Psoas muscle (tissue), 8 donors: ENCODE measurements at regions of chr3 and their contacts with region 1.

Region 1: DNA sequence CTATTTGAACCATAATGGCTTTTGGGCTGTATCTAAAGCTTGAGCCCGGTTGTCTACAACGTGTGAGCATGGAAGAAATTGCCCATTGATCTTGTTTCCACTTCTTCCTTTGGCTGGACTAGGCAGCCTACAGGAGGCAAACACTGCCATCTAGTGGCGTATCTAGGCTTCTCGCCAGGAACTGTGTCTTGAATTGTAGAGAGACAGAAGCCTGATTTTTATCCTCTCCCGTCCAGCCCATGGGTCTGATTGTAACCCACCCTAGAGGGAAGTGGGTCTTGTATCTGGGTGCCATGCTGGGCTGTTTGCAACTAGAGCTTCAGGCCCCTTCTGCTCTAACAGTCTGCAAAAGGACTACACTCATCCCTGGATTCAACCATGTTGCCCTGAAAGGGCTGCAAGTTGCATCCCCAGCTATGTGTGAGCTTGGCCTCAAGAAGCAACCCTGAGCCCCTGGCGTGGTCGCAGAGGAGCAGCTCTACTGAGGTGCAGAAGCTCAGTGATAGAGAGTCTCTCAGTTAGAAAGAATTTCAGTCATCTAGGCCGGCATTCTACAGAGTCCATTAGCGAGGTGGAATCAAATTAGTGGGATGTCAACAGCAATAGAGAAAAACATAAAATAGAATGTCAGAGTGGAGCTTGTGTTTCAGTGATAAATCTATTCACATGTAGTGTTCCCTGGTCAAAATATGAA is 170.2 kb upstream of the UMPS start:
- DNase-seq: peak; percentile 47 to 73
- ATAC-seq: peak; percentile 75 to 90 (median 78)
- H3K4me3 ChIP-seq: no peak overlapping the region
- H3K27ac ChIP-seq: no peak overlapping the region
- H3K4me1 ChIP-seq: peaks cover 4% of the 10 kb centered on the region
- H3K27me3 ChIP-seq: no peaks in the 10 kb centered on the region
- CTCF ChIP-seq: peak; percentile 86

Region 2: GRCh38 chr3:124014366-124014942 is 545.6 kb before region 1 on chr3:
- intact Hi-C with region 1: loop called in 1 of 2 experiments (anchors 10 kb)
- DNase-seq: no peak
- ATAC-seq: no peak
- H3K4me3 ChIP-seq: no peak overlapping the region
- H3K27ac ChIP-seq: no peak overlapping the region
- H3K4me1 ChIP-seq: no peaks in the 10 kb centered on the region
- H3K27me3 ChIP-seq: no peaks in the 10 kb centered on the region
- CTCF ChIP-seq: no peak

Region 3: GRCh38 chr3:124351430-124352148 is 208.4 kb before region 1 on chr3:
- intact Hi-C with region 1: loop called in 1 of 2 experiments (anchors 5 kb)
- DNase-seq: no peak
- ATAC-seq: no peak
- H3K4me3 ChIP-seq: no peak overlapping the region
- H3K27ac ChIP-seq: no peak overlapping the region
- H3K4me1 ChIP-seq: no peaks in the 10 kb centered on the region
- H3K27me3 ChIP-seq: no peaks in the 10 kb centered on the region
- CTCF ChIP-seq: peak; percentile 47

Region 4: GRCh38 chr3:124492811-124493210 is 67.2 kb before region 1 on chr3:
- intact Hi-C with region 1: loop called (anchors 2 to 5 kb)
- DNase-seq: no peak
- ATAC-seq: peak; percentile 70 to 87 (median 84)
- H3K4me3 ChIP-seq: no peak overlapping the region
- H3K27ac ChIP-seq: no peak overlapping the region
- H3K4me1 ChIP-seq: no peaks in the 10 kb centered on the region
- H3K27me3 ChIP-seq: no peaks in the 10 kb centered on the region
- CTCF ChIP-seq: peak; percentile 45

Region 5: DNA sequence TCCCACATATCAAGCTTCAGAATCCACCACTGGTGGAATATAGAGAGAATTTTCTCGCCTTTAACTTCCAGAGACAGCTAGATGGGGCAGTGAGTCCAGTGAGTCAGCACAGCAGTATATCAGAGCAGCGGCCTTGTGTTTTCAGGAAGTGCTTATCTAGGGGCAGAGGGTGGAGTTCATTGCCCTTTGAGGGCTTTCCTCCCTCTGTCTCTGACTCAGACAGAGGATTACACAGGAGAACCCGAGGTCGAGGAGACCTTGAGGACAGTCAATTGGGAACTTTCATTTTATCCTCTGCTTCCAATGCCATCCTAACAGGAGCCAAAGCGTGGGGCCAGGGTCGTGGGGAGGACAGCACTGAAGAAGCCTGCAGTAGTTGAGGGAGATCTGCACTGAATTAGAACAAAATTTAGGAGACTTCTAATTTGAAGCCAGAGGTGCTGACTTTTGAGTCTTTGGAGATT is 60.6 kb after region 1 on chr3:
- intact Hi-C with region 1: loop called in 1 of 2 experiments (anchors 5 kb)
- DNase-seq: no peak
- ATAC-seq: peak; percentile 51 to 85 (median 78)
- H3K4me3 ChIP-seq: no peak overlapping the region
- H3K27ac ChIP-seq: peak overlapping the region; percentile 30
- H3K4me1 ChIP-seq: peaks cover 37% of the 10 kb centered on the region
- H3K27me3 ChIP-seq: no peaks in the 10 kb centered on the region
- CTCF ChIP-seq: no peak

Region 6: DNA sequence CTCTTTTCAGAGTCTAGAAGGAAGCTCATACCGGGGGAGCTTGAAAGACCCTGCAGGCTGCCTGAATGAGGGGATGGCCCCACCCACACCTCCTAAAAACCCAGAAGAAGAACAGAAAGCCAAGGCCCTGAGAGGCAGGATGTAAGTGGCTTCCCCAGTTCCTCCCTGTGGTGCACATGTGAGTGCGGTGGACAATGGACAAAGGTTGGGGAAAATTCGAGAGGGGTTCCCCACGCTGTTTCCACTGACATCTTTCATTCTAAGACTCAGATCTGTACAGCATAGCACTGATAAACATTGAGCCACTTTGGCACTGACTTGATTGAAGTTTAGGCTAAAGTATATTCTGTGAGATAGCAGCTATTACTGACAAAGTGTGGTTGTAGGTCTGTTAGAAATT is 90.8 kb after region 1 on chr3:
- intact Hi-C with region 1: no loop called
- DNase-seq: no peak
- ATAC-seq: no peak
- H3K4me3 ChIP-seq: no peak overlapping the region
- H3K27ac ChIP-seq: no peak overlapping the region
- H3K4me1 ChIP-seq: peaks cover 17% of the 10 kb centered on the region
- H3K27me3 ChIP-seq: no peaks in the 10 kb centered on the region
- CTCF ChIP-seq: no peak

Region 7: GRCh38 chr3:124688581-124689454 is 128.8 kb after region 1 on chr3:
- intact Hi-C with region 1: loop called (anchors 1 kb)
- DNase-seq: peak; percentile 70 to 84
- ATAC-seq: peak; percentile 85 to 96 (median 88)
- H3K4me3 ChIP-seq: no peak overlapping the region
- H3K27ac ChIP-seq: no peak overlapping the region
- H3K4me1 ChIP-seq: peaks cover 4% of the 10 kb centered on the region
- H3K27me3 ChIP-seq: no peaks in the 10 kb centered on the region
- CTCF ChIP-seq: peak; percentile 86

Region 8: GRCh38 chr3:124905849-124906248 is 345.8 kb after region 1 on chr3:
- intact Hi-C with region 1: loop called in 1 of 2 experiments (anchors 10 kb)
- DNase-seq: no peak
- ATAC-seq: no peak
- H3K4me3 ChIP-seq: no peak overlapping the region
- H3K27ac ChIP-seq: no peak overlapping the region
- H3K4me1 ChIP-seq: no peaks in the 10 kb centered on the region
- H3K27me3 ChIP-seq: peaks cover 0 to 2% (median 0%) of the 10 kb centered on the region in 3 donors
- CTCF ChIP-seq: no peak